AG04449 (cell line): ENCODE measurements at regions of chr4 and their contacts with region 1.

Region 1: GRCh38 chr4:77240469-77241066 is 83.6 kb downstream of the CCNG2 start:
- DNase-seq: no peak
- H3K4me3 ChIP-seq: no peak overlapping the region
- CTCF ChIP-seq: peak; percentile 68

Region 2: DNA sequence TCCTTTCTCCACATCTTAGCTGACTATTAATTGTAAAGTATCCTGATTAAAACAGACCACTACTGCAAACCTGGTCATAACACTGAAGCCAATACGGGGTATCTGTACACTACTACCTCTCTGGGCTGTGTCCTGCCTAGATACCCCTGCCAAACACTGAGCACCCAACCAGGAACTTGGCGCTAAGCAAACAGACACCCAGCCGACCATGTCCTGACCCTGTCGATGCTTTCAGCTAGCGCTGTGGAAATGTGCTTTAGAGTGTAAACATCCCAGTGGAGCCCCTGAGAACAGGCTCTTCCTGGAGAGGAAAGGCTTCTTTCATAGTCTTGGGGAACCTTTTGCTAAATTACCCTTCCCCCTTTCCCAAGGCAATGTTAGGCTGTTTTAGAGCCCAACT is 30.6 kb before region 1 on chr4:
- CTCF ChIA-PET with region 1: no interaction called
- POLR2A ChIA-PET with region 1: no interaction called
- DNase-seq: no peak
- H3K4me3 ChIP-seq: no peak overlapping the region
- CTCF ChIP-seq: no peak

Region 3: GRCh38 chr4:77220828-77221613 is 19.5 kb before region 1 on chr4:
- CTCF ChIA-PET with region 1: interaction called, 19 read pairs
- POLR2A ChIA-PET with region 1: no interaction called
- DNase-seq: no peak
- H3K4me3 ChIP-seq: no peak overlapping the region
- CTCF ChIP-seq: no peak

Region 4: GRCh38 chr4:77358315-77358928 is 117.9 kb after region 1 on chr4:
- CTCF ChIA-PET with region 1: interaction called, 135 read pairs
- POLR2A ChIA-PET with region 1: no interaction called
- DNase-seq: no peak
- H3K4me3 ChIP-seq: no peak overlapping the region
- CTCF ChIP-seq: peak; percentile 58